ENCODE measurements at regions of chr12 and their contacts with region 1.

Region 1: DNA sequence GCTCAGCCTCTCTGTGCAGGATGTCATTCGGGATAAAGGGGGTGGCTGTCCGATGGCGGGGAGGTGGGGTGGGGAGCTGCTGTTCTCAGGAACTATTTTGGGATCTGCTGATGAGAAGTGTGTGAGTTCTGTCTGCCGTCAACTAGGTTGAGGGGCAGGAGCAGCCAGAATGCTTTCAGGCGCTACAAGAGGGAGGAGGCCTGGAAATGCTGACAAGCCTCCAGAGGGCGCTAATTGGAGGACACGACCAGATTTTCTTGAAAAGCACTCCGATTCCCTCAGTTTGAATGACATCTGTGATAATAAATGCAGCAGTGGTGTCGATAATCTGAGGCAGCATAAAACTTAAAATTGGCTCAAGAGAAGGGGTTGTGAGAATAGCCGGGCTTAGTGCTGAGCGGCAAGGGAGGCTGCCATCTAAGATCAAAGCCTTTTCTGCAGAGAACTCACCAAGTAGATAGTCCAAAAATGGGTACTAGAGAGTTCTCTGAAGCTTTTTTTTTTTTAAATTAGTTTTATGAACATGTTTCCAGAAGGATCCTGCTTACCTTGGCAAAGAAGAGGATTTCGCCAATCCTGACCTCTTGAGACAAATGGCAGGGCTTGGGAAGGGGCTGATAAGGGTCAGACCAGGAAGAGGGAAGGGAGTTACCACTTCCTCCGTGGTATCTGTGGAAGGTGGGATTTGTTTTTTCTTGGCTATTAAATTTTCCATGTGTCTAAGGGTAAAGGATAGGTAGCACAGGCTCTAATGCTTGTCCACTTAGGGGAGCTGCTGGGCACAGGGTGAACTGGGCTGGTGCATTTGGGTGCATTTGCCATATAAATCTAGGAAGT is 94.4 kb downstream of the CRACR2A start:
- DNase-seq: no peak
- ATAC-seq: no peak
- H3K4me3 ChIP-seq: no peak overlapping the region
- H3K27ac ChIP-seq: no peak overlapping the region
- H3K4me1 ChIP-seq: peaks cover 3 to 7% of the 10 kb centered on the region in 2 experiments; a peak in 1 of 4 replicates
- H3K27me3 ChIP-seq: no peaks in the 10 kb centered on the region
- CTCF ChIP-seq: peak in 2 of 3 experiments; percentile 42 to 56; a peak in 4 of 6 replicates
- POLR2A ChIP-seq: no peak
- RAD21 ChIP-seq: peak; percentile 22

Region 2: DNA sequence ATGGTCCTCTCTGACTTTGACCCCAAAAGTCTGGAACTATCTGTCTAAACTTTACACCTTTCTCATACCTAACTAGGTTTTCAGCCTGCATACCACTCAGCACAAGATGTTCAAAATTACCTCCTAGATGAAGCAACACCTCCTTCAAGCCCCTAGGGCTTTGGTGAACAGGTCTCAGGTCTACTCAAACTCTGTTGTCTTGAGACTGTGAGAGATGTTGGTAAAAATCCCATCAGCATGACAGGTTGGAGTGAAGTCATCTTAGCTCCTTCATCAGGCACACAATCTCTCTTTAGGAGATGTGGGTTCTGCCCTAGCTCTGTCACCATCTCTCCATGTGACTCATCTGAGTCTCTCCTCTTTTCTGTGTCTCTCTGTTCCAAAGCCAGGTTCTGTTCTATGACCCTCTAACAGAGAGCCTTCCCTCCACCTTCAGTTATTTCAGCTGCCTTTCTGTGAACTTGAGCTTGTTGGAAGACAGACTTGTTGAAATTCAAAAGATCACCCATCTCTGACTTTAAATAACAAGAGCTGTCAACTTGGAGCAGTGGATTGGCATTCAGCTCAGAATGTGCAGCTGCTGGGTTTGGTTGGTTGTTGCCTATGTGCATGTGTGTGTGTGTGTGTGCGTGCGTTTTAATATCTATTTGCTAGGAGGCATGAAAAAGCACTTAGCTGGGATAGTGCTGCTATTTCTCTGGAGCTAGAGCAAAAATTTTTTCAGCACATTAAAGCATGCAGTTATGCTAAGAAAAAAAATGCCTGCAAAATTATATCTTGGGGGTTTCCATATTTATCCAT is 36.3 kb before region 1 on chr12:
- CTCF ChIA-PET with region 1: no interaction called
- POLR2A ChIA-PET with region 1: no interaction called
- RAD21 ChIA-PET with region 1: no interaction called
- intact Hi-C with region 1: loop called (anchors 1 kb)
- DNase-seq: no peak
- ATAC-seq: no peak
- H3K4me3 ChIP-seq: no peak overlapping the region
- H3K27ac ChIP-seq: no peak overlapping the region
- H3K4me1 ChIP-seq: no peaks in the 10 kb centered on the region
- H3K27me3 ChIP-seq: no peaks in the 10 kb centered on the region
- CTCF ChIP-seq: no peak
- POLR2A ChIP-seq: no peak
- RAD21 ChIP-seq: no peak

Region 3: DNA sequence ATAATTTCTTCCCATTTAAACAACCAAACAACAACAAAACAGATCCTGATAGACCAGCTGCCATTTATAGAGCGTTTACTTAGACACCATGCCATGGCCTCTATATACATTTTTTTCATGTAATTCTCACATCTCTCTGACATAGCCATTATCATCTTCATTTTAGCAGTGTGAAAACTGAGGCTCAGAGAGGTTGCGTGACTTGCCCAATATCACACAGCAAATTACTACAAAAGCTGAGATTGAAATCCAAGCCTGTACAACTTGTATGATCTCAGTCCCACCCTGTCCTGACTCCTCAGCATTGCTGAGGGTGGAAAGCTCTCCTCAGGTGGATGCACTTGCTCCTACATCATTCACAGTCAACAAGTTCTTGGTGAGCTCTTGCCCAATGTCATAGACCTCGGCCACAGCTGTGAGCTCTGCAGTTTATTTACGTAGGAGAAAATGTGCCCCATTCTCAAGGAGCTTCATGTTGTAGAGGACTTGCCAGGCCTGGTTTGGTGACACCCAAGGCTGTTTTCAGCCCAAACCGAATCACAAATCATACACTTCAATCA is 38.8 kb after region 1 on chr12:
- CTCF ChIA-PET with region 1: no interaction called
- POLR2A ChIA-PET with region 1: no interaction called
- RAD21 ChIA-PET with region 1: no interaction called
- intact Hi-C with region 1: no loop called
- DNase-seq: no peak
- ATAC-seq: no peak
- H3K4me3 ChIP-seq: no peak overlapping the region
- H3K27ac ChIP-seq: no peak overlapping the region
- H3K4me1 ChIP-seq: peaks cover 0 to 11% of the 10 kb centered on the region in 2 experiments; a peak in 1 of 4 replicates
- H3K27me3 ChIP-seq: no peaks in the 10 kb centered on the region
- CTCF ChIP-seq: no peak
- POLR2A ChIP-seq: no peak
- RAD21 ChIP-seq: no peak

Region 4: DNA sequence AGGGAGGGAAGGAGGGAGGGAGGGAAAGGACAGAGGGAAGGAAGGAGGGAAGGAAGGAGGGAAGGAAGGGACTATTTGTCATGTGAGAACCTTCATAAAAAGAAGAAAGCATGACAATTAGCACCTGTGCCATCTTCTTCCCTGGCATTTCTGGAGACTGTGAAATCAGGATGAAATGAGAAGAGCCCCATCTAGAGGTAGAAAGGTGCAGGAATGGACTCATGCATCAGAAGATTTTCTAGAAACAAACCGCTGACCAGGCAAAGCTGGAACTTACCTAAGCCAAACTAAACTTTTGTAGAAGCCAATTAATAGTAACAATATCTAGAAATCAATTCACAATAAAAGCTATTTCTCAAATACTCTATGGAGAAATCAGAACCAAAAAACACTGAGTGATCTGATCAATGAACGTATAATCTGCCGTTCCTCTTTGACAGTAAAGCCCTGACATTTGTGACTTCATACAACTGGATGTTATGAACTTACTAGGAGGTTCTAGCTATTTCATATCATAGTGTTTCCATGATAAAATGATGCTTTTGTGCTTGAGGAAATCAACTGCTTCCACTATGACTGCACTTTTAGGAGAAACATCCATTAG is 118.8 kb after region 1 on chr12:
- CTCF ChIA-PET with region 1: no interaction called
- POLR2A ChIA-PET with region 1: no interaction called
- RAD21 ChIA-PET with region 1: no interaction called
- intact Hi-C with region 1: loop called (anchors 5 kb)
- DNase-seq: peak; percentile 33
- ATAC-seq: peak; percentile 90
- H3K4me3 ChIP-seq: no peak overlapping the region
- H3K27ac ChIP-seq: no peak overlapping the region
- H3K4me1 ChIP-seq: no peaks in the 10 kb centered on the region
- H3K27me3 ChIP-seq: peaks cover 31% of the 10 kb centered on the region
- CTCF ChIP-seq: peak; percentile 71 to 74 (median 71)
- POLR2A ChIP-seq: no peak
- RAD21 ChIP-seq: peak; percentile 82

Region 5: DNA sequence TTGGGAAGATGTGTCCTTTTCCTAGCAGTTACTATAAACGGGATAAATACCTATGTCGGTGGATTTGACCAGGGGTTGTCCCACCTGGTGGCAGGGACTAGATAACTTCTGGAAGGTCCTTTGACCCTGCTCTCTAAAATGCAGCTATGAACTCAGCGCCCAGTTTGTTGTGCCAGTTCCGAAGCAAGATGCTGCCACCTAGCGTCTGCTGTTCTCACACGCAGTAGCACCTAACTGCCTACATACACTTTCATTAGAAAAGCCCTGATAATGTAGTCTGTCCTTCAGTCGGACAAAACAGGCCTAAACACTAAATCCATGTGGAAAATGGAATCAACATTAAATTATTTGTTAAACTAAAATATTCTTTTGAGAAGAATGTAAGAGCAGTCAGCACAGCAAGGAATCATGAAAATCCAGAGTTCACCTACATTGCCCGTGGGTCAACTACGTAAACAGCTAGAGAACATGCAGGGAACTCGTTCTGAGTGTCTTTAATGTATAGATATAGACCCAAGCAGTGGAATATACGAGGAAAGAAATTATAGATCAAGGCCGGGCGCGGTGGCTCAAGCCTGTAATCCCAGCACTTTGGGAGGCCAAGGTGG is 145.4 kb after region 1 on chr12:
- CTCF ChIA-PET with region 1: interaction called, 3 read pairs
- POLR2A ChIA-PET with region 1: no interaction called
- RAD21 ChIA-PET with region 1: no interaction called
- intact Hi-C with region 1: loop called (anchors 10 kb)
- DNase-seq: peak; percentile 64
- ATAC-seq: peak; percentile 98
- H3K4me3 ChIP-seq: no peak overlapping the region
- H3K27ac ChIP-seq: no peak overlapping the region
- H3K4me1 ChIP-seq: no peaks in the 10 kb centered on the region
- H3K27me3 ChIP-seq: peaks cover 22% of the 10 kb centered on the region
- CTCF ChIP-seq: peak; percentile 74 to 95 (median 93)
- POLR2A ChIP-seq: no peak
- RAD21 ChIP-seq: peak; percentile 86

Region 6: GRCh38 chr12:4037747-4038312 is 379.3 kb after region 1 on chr12:
- CTCF ChIA-PET with region 1: no interaction called
- POLR2A ChIA-PET with region 1: no interaction called
- RAD21 ChIA-PET with region 1: no interaction called
- intact Hi-C with region 1: no loop called
- DNase-seq: no peak
- ATAC-seq: peak; percentile 54; the same call in 1 of the 2 replicates
- H3K4me3 ChIP-seq: no peak overlapping the region
- H3K27ac ChIP-seq: no peak overlapping the region
- H3K4me1 ChIP-seq: no peaks in the 10 kb centered on the region
- H3K27me3 ChIP-seq: peaks cover 60% of the 10 kb centered on the region
- CTCF ChIP-seq: peak; percentile 67 to 76 (median 73)
- POLR2A ChIP-seq: no peak
- RAD21 ChIP-seq: peak; percentile 71

Measured in HCT116 (cell line).